T-cell (primary cell): ENCODE measurements at regions of chr12 and their contacts with region 1.

Region 1: GRCh38 chr12:59678759-59679411 is 83.1 kb downstream of the SLC16A7 start:
- DNase-seq: no peak
- ATAC-seq: no peak
- H3K4me3 ChIP-seq: no peak overlapping the region
- H3K4me3 Mint-ChIP-seq: no peak overlapping the region
- H3K27ac ChIP-seq: no peak overlapping the region
- H3K27ac Mint-ChIP-seq: no peak overlapping the region
- H3K4me1 ChIP-seq: peaks cover 0 to 5% of the 10 kb centered on the region in 2 experiments
- H3K4me1 Mint-ChIP-seq: peaks cover 38 to 49% (median 48%) of the 10 kb centered on the region in 3 donors
- H3K27me3 ChIP-seq: no peaks in the 10 kb centered on the region
- H3K27me3 Mint-ChIP-seq: no peaks in the 10 kb centered on the region

Region 2: GRCh38 chr12:60182354-60182753 is 503.5 kb after region 1 on chr12:
- CTCF ChIA-PET with region 1: interaction called in 1 of 2 experiments, 12 read pairs
- POLR2A ChIA-PET with region 1: no interaction called
- DNase-seq: no peak
- ATAC-seq: no peak
- H3K4me3 ChIP-seq: no peak overlapping the region
- H3K4me3 Mint-ChIP-seq: no peak overlapping the region
- H3K27ac ChIP-seq: no peak overlapping the region
- H3K27ac Mint-ChIP-seq: no peak overlapping the region
- H3K4me1 ChIP-seq: no peaks in the 10 kb centered on the region
- H3K4me1 Mint-ChIP-seq: no peaks in the 10 kb centered on the region
- H3K27me3 ChIP-seq: no peaks in the 10 kb centered on the region
- H3K27me3 Mint-ChIP-seq: no peaks in the 10 kb centered on the region